PC-3 (cell line): ENCODE measurements at regions of chr9 and their contacts with region 1.

Region 1: GRCh38 chr9:100028201-100028784 is 70.5 kb downstream of the ERP44 start:
- DNase-seq: peak; percentile 74
- ATAC-seq: peak; percentile 85
- H3K4me3 ChIP-seq: no peak overlapping the region
- H3K27ac ChIP-seq: no peak overlapping the region
- H3K4me1 ChIP-seq: no peaks in the 10 kb centered on the region
- H3K27me3 ChIP-seq: no peaks in the 10 kb centered on the region
- CTCF ChIP-seq: peak; percentile 84

Region 2: DNA sequence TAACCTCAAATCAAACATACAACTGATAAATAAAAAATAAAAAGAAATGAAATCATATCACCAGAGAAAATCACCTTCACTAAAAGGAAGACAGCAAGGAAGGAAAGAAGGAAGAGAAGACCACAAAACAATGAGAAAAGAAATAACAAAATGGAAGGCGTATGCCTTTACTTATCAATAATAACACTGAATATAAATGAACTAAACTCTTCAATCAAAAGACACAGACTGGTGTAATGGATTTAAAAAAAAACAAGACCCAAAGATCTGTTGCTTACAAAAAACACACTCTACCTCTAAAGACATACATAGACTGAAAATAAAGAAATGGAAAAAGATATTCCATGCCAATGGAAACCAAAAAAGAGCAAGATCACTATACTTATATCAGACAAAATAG is 10.2 kb after region 1 on chr9:
- CTCF ChIA-PET with region 1: no interaction called
- POLR2A ChIA-PET with region 1: no interaction called
- intact Hi-C with region 1: no loop called
- DNase-seq: no peak
- ATAC-seq: no peak
- H3K4me3 ChIP-seq: no peak overlapping the region
- H3K27ac ChIP-seq: no peak overlapping the region
- H3K4me1 ChIP-seq: no peaks in the 10 kb centered on the region
- H3K27me3 ChIP-seq: no peaks in the 10 kb centered on the region
- CTCF ChIP-seq: no peak

Region 3: DNA sequence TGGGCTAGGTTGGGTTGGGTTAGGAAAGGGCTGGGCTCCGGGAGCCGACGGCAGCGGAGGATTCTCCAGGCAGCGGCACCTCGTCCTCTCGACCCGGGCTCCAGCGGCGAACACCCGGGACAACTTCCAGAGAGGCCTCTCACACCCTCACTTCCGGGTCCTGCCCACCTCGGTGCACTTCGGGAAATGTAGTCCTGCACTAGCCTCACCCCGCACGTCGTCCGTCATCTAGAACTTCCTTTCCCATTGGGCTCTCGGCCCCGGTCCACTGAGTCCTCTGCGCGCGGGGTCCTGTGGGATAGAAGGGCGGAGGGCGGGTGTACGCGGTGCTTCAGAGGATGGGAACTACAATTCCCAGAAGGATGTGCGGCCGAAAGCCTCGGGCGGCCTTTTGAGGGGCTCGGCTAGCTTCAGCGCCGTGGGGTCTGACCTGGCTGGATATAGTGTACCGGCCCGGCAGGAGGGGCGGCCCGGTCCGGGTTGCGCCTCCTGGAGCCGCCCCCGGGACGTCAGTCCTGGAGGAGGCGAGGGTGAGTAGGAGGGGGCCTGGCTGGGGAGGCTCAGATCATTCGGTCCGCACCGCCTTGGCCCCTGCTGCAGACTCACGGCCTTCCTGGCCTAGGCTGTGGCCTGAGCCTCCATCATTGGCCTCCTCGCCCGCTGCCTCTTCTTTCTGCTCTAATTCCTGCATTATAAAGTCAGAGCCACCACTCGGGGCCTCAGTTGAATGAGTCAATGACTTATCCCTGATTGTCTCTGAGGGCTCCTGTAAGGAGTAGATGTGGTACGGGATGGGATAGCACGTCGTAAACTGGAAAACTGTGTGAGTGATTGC is 70.8 kb after region 1 on chr9 and contains the starts of genes ERP44 and INVS:
- CTCF ChIA-PET with region 1: no interaction called
- POLR2A ChIA-PET with region 1: no interaction called
- intact Hi-C with region 1: loop called (anchors 2 kb)
- DNase-seq: peak; percentile 97
- ATAC-seq: peak; percentile 93
- H3K4me3 ChIP-seq: peak within 1 kb of the TSS; percentile 99
- H3K27ac ChIP-seq: peak within 1 kb of the TSS; percentile 71
- H3K4me1 ChIP-seq: peaks cover 28% of the 10 kb centered on the region
- H3K27me3 ChIP-seq: no peaks in the 10 kb centered on the region
- CTCF ChIP-seq: no peak
- total RNA-seq, gene ERP44: 5.8 and 7.7 TPM in 2 replicates
- total RNA-seq, gene INVS: 8.9 and 9.6 TPM in 2 replicates

Region 4: GRCh38 chr9:100222674-100223073 is 194.4 kb after region 1 on chr9:
- CTCF ChIA-PET with region 1: no interaction called
- POLR2A ChIA-PET with region 1: no interaction called
- intact Hi-C with region 1: loop called (anchors 1 kb)
- DNase-seq: peak; percentile 33
- ATAC-seq: no peak
- H3K4me3 ChIP-seq: no peak overlapping the region
- H3K27ac ChIP-seq: no peak overlapping the region
- H3K4me1 ChIP-seq: no peaks in the 10 kb centered on the region
- H3K27me3 ChIP-seq: no peaks in the 10 kb centered on the region
- CTCF ChIP-seq: peak; percentile 57

Region 5: DNA sequence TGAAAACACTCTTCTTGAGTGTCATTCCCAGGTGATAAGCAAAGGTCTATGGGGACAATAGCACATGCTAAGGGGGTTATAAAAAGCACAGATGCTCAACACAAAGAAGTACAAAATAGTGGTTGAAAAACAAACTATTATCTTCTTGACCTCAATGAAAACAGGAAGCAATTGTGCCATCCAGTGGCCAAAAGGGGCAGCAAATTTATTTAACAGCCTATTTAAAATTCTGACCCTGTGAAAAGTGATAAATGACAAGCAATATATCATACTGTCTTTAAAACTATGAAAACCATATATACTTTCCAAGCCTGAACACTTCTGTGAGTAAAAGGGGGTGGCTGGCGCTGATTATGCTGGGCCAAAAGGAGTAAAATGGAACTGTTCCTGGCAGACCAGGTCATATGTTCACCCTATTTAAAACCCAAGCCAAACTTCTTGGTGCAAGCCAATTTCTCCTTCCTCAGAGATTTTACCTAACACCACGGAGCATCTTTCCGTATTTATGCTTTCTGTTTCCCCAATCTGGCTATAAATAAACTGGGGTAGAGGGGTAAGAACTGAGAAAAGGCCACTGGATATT is 294.8 kb after region 1 on chr9:
- CTCF ChIA-PET with region 1: no interaction called
- POLR2A ChIA-PET with region 1: no interaction called
- intact Hi-C with region 1: loop called (anchors 5 kb)
- DNase-seq: peak; percentile 44
- ATAC-seq: no peak
- H3K4me3 ChIP-seq: no peak overlapping the region
- H3K27ac ChIP-seq: no peak overlapping the region
- H3K4me1 ChIP-seq: peaks cover under 1% of the 10 kb centered on the region
- H3K27me3 ChIP-seq: no peaks in the 10 kb centered on the region
- CTCF ChIP-seq: peak; percentile 72